Astrocyte of the cerebellum (primary cell): ENCODE measurements at regions of chr19 and their contacts with region 1.

Region 1: DNA sequence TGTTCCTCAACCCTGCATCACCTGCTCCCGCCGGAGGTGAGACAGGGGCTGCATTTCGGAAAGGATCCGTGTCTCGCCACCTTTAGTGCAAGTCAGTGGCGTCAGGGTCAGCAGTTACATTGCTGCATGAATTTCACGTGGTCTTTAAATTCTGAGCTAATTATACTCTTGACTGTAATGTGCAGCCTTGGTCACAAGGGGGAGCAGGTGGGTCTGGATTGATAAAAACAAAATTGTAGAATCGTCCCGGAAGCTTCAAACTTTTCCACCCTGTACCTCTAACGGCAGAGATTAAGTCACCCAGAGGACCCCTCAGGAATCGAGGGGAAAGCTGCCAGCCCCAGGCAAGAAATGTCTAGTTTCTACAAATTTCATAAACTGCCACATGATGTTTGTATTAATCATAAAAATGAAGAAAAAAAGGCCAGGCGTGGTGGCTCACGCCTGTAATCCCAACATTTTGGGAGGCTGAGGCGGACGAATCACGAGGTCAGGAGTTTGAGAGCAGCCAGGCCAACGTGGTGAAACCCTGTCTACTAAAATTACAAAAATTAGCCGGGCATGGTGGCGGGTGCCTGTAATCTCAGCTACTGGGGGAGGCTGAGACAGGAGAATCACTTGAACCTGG is 20.2 kb downstream of the BBC3 start:
- DNase-seq: peak; percentile 64
- H3K4me3 ChIP-seq: no peak overlapping the region
- CTCF ChIP-seq: peak; percentile 76

Region 2: GRCh38 chr19:47168065-47168464 is 42.7 kb before region 1 on chr19:
- in situ Hi-C with region 1: loop called (anchors 5 kb)
- DNase-seq: no peak
- H3K4me3 ChIP-seq: no peak overlapping the region
- CTCF ChIP-seq: no peak

Region 3: GRCh38 chr19:47179653-47180310 is 31.0 kb before region 1 on chr19:
- in situ Hi-C with region 1: no loop called
- DNase-seq: no peak
- H3K4me3 ChIP-seq: no peak overlapping the region
- CTCF ChIP-seq: no peak

Region 4: GRCh38 chr19:47247329-47247886 is 36.6 kb after region 1 on chr19:
- in situ Hi-C with region 1: no loop called
- DNase-seq: peak; percentile 56
- H3K4me3 ChIP-seq: no peak overlapping the region
- CTCF ChIP-seq: peak; percentile 91